ENCODE measurements at regions of chr15 and their contacts with region 1.

Region 1: GRCh38 chr15:68543165-68544008 is 35.4 kb upstream of the CORO2B start:
- DNase-seq: peak; percentile 95
- H3K4me3 ChIP-seq: no peak overlapping the region
- H3K27ac ChIP-seq: peak overlapping the region; percentile 74
- H3K4me1 ChIP-seq: peaks cover 18% of the 10 kb centered on the region
- H3K27me3 ChIP-seq: peaks cover 0 to 2% of the 10 kb centered on the region in 2 experiments
- CTCF ChIP-seq: no peak
- POLR2A ChIP-seq: peak; percentile 52

Region 2: DNA sequence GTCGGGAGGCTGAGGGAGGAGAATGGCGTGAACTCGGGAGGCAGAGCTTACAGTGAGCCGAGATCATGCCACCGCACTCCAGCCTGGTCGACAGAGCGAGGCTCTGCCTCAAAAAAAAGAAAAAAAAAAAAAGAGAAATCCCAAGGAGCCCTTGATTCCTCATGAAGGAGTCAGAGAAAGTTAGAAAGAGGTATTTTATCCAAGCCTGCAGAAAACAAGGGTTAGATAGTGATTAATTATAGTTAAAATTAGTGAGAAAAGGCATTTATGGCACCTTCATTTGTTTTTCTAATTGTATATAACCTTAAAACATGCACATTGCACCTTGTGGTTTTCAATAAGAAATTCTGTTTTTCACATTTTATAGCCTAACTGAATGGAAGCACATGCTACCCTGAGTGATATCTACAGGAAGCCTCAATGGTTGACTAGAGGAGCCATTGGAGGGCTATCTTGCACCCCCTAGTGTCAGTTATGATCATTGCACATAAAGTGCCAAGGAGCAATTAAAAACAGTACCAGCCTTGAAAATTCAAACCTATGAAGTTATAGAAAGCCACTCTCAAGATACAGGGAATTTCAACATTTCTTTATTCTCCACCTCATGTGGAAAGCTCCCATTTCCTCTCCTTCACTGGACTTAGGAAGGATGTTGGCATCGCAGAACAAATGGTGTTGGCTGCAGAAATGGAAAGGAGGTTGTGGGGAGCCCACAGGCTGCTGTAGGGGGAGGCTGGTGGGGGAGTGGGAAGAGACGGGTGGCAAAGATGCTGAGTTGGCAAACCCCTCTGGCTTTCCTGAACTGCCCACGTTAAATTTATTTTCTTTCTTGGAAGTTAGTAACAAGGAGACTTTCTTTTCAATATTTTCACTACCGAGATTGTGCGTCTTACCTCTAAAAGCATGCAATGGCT is 160.0 kb before region 1 on chr15:
- CTCF ChIA-PET with region 1: no interaction called
- POLR2A ChIA-PET with region 1: no interaction called
- dilution Hi-C with region 1: no loop called
- intact Hi-C with region 1: loop called (anchors 5 kb)
- DNase-seq: peak; percentile 69
- H3K4me3 ChIP-seq: no peak overlapping the region
- H3K27ac ChIP-seq: peak overlapping the region; percentile 50
- H3K4me1 ChIP-seq: peaks cover 37% of the 10 kb centered on the region
- H3K27me3 ChIP-seq: no peaks in the 10 kb centered on the region
- CTCF ChIP-seq: peak; percentile 61 to 69
- POLR2A ChIP-seq: no peak

Region 3: DNA sequence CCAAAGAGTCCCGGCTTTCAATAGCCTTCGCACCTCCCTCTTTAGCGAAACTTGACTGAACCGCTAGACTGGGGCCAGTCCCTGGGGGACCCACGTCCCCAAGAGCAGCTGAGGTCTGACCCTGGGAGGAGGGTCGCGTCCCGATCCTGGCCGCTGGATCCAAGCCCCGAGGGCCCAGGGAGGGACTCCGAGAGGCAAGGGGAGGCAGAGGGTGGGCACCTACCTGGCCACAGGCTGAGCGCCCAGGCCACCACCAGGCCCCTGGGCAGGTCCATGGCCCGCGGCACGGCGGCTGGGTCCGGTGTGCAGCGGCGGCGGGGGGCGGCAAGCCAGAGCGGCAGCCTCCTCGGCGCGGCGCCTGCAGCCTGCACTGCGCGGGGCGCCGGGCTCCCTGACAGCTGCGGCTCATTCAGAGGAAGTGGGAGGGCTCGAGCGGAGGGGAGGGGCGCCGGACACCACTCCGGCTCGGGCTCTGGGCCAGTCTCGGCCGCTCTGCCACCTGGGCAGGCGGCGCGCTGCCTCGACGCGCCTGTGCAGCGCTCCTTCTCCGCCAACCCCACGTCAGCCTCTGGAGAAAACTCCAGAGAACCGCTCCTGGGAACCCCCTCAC is 111.5 kb before region 1 on chr15 and contains the start of gene ITGA11:
- CTCF ChIA-PET with region 1: no interaction called
- POLR2A ChIA-PET with region 1: no interaction called
- dilution Hi-C with region 1: no loop called
- intact Hi-C with region 1: no loop called
- DNase-seq: peak; percentile 60
- H3K4me3 ChIP-seq: peak within 1 kb of the TSS; percentile 19 to 37 (median 23)
- H3K27ac ChIP-seq: no peak within 1 kb of the TSS
- H3K4me1 ChIP-seq: peaks cover 13% of the 10 kb centered on the region
- H3K27me3 ChIP-seq: peaks cover 69 to 76% of the 10 kb centered on the region in 2 experiments
- CTCF ChIP-seq: no peak
- POLR2A ChIP-seq: no peak
- total RNA-seq, gene ITGA11: 0.18 and 0.58 TPM in 2 replicates